GM12878 (cell line): ENCODE measurements at regions of chr1 and their contacts with region 1.

Region 1: GRCh38 chr1:30801771-30802198 is 44.2 kb upstream of the LAPTM5 start:
- DNase-seq: no peak
- ATAC-seq: peak; percentile 86
- H3K4me3 ChIP-seq: no peak overlapping the region
- H3K27ac ChIP-seq: no peak overlapping the region
- H3K4me1 ChIP-seq: no peaks in the 10 kb centered on the region
- H3K27me3 ChIP-seq: peaks cover 11 to 17% of the 10 kb centered on the region in 2 experiments
- CTCF ChIP-seq: peak; percentile 94 to 95 (median 95)
- EP300 ChIP-seq: no peak
- POLR2A ChIP-seq: no peak
- RAD21 ChIP-seq: peak; percentile 97

Region 2: GRCh38 chr1:30790850-30791778 is 10.7 kb before region 1 on chr1:
- CTCF ChIA-PET with region 1: interaction called, 78 read pairs
- POLR2A ChIA-PET with region 1: no interaction called
- RAD21 ChIA-PET with region 1: interaction called, 7 read pairs
- SMC1A ChIA-PET with region 1: interaction called, 3 read pairs
- in situ Hi-C with region 1: no loop called
- intact Hi-C with region 1: no loop called
- DNase-seq: peak; percentile 41
- ATAC-seq: peak; percentile 79
- H3K4me3 ChIP-seq: no peak overlapping the region
- H3K27ac ChIP-seq: 0 out of 2 replicates have a peak overlapping the region, but pooled peaks have one; percentile 24
- H3K4me1 ChIP-seq: peaks cover 7% of the 10 kb centered on the region
- H3K27me3 ChIP-seq: no peaks in the 10 kb centered on the region; a peak in 1 of 4 replicates
- CTCF ChIP-seq: no peak
- EP300 ChIP-seq: no peak
- POLR2A ChIP-seq: no peak
- RAD21 ChIP-seq: no peak

Region 3: GRCh38 chr1:30868833-30869435 is 67.1 kb after region 1 on chr1:
- CTCF ChIA-PET with region 1: interaction called, 11 read pairs
- POLR2A ChIA-PET with region 1: no interaction called
- RAD21 ChIA-PET with region 1: interaction called, 7 read pairs
- SMC1A ChIA-PET with region 1: no interaction called
- in situ Hi-C with region 1: no loop called
- intact Hi-C with region 1: no loop called
- DNase-seq: peak; percentile 15
- ATAC-seq: peak; percentile 82
- H3K4me3 ChIP-seq: no peak overlapping the region
- H3K27ac ChIP-seq: no peak overlapping the region
- H3K4me1 ChIP-seq: peaks cover 9% of the 10 kb centered on the region
- H3K27me3 ChIP-seq: peaks cover 4 to 7% of the 10 kb centered on the region in 2 experiments; a peak in 3 of 4 replicates
- CTCF ChIP-seq: no peak
- EP300 ChIP-seq: peak in 1 of 2 experiments; percentile 56; a peak in 1 of 4 replicates
- POLR2A ChIP-seq: no peak
- RAD21 ChIP-seq: no peak

Region 4: DNA sequence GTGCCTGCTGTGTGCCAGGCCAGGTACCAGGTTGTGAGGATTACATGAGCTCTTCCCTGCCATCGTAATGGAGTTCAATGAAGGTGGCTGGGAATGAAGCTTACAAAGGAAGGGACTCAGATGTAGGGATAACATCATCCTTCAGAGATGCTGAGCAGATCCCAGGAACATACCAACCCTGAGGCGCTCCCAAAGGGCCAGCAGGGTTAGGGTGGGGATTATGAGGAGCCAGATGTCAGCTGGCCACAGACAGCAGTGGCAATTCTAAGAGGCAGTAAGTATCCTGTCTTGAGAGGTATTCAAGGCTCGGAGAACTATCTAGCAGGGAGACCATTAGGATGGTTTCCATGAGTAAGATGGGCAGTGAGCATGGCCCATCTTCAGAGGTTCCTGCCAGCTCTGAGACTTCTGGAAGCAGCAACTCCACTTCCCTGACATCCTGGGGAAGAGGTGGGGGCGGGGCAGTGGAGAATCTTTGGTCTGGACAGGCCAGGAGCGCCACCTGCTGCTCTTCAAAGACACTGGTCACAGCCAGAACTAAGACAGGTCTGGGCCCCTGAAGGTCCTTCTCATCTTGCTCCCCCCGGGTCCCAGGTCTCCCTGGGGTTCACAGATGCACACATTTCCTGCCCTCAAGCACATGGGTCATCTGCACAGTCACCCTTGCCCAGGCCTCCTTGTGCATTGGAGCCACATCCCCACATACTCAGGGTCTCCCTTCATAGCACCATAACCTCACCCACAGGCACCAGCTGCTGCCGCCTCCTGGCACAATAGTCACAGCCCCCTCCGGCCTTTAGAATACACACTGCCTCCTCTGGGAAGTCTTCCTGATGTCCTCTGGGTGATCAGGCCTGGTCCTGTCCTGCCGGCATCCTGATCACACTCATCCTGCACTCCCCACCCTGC is 109.5 kb after region 1 on chr1:
- CTCF ChIA-PET with region 1: interaction called, 303 read pairs
- POLR2A ChIA-PET with region 1: interaction called, 10 read pairs
- RAD21 ChIA-PET with region 1: interaction called, 154 read pairs
- SMC1A ChIA-PET with region 1: interaction called, 160 read pairs
- in situ Hi-C with region 1: loop called (anchors 5 kb)
- intact Hi-C with region 1: loop called (anchors 1 kb)
- DNase-seq: no peak
- ATAC-seq: peak; percentile 84
- H3K4me3 ChIP-seq: no peak overlapping the region
- H3K27ac ChIP-seq: no peak overlapping the region
- H3K4me1 ChIP-seq: no peaks in the 10 kb centered on the region
- H3K27me3 ChIP-seq: peaks cover 16% of the 10 kb centered on the region in 2 experiments
- CTCF ChIP-seq: peak; percentile 71 to 82 (median 79)
- EP300 ChIP-seq: no peak
- POLR2A ChIP-seq: no peak
- RAD21 ChIP-seq: peak; percentile 88

Region 5: GRCh38 chr1:30929135-30929889 is 127.5 kb after region 1 on chr1:
- CTCF ChIA-PET with region 1: interaction called, 119 read pairs
- POLR2A ChIA-PET with region 1: interaction called, 3 read pairs
- RAD21 ChIA-PET with region 1: interaction called, 11 read pairs
- SMC1A ChIA-PET with region 1: interaction called, 49 read pairs
- in situ Hi-C with region 1: no loop called
- intact Hi-C with region 1: loop called (anchors 5 kb)
- DNase-seq: no peak
- ATAC-seq: peak; percentile 91
- H3K4me3 ChIP-seq: no peak overlapping the region
- H3K27ac ChIP-seq: no peak overlapping the region
- H3K4me1 ChIP-seq: no peaks in the 10 kb centered on the region; the same call in 1 of the 2 replicates
- H3K27me3 ChIP-seq: no peaks in the 10 kb centered on the region
- CTCF ChIP-seq: peak; percentile 69 to 80 (median 79)
- EP300 ChIP-seq: no peak
- POLR2A ChIP-seq: no peak
- RAD21 ChIP-seq: peak; percentile 78

Region 6: DNA sequence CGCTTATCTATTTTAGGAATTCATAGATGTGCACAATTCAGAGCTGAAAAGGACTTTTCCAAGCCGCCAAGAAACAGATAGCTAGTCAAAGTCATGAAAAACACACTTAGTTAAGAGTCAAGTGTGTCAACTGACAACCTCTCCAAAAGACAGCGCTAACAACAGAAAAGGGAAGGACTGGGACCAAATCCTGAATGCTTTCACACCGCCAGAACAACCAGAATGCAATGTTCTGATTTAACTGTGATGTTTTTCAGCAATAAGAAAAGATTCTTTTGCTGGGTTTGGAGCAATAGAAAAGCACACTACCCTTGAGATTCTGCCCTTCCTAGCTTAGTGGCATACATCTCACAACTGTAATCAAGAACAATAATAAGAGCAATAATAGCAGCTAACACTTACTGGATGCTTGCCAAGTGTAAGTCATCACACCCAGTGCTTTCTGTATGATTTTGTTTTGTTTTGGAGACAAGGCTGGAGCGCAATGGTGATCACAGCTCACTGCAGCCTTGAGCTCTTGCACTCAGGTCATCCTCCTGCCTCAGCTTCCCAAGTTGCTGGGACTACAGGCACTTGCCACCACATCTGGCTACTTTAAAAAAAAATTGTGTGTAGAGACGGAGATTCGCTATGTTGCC is 140.7 kb after region 1 on chr1:
- CTCF ChIA-PET with region 1: no interaction called
- POLR2A ChIA-PET with region 1: no interaction called
- RAD21 ChIA-PET with region 1: no interaction called
- SMC1A ChIA-PET with region 1: no interaction called
- in situ Hi-C with region 1: no loop called
- intact Hi-C with region 1: no loop called
- DNase-seq: no peak
- ATAC-seq: no peak
- H3K4me3 ChIP-seq: no peak overlapping the region
- H3K27ac ChIP-seq: no peak overlapping the region
- H3K4me1 ChIP-seq: no peaks in the 10 kb centered on the region
- H3K27me3 ChIP-seq: no peaks in the 10 kb centered on the region
- CTCF ChIP-seq: no peak
- EP300 ChIP-seq: no peak
- POLR2A ChIP-seq: no peak
- RAD21 ChIP-seq: no peak